Activated naive CD4-positive, alpha-beta T cell treated with anti-CD3 and anti-CD28 coated beads for 36 hours (primary cell): ENCODE measurements at regions of chr2 and their contacts with region 1.

Region 1: GRCh38 chr2:222424729-222425671 is 657 bp downstream of the SGPP2 start:
- DNase-seq: peak; percentile 67
- H3K4me3 Mint-ChIP-seq: peak overlapping the region; percentile 83
- H3K27ac Mint-ChIP-seq: peak overlapping the region; percentile 88
- H3K4me1 Mint-ChIP-seq: peaks cover 42% of the 10 kb centered on the region
- H3K27me3 Mint-ChIP-seq: peaks cover 56% of the 10 kb centered on the region

Region 2: DNA sequence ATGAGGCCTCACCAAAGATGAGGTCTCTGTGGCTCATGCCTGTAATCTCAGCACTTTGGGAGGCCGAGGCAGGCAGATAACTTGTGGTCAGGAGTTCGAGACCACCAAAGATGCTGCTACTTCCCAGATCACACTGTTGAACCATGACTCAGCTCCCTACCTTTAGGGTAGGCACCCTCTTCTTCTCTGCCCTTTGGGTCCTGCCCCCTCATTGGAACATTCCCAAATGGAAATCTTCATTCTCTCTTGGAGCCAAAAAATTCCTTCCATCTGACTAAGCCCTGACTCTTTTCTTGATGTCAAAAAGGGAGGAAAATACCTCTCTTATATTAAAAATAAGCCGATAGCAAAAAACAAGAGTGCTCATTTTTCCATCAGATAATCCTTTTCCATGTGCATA is 309.7 kb before region 1 on chr2:
- CTCF ChIA-PET with region 1: no interaction called
- intact Hi-C with region 1: no loop called
- DNase-seq: no peak
- H3K4me3 Mint-ChIP-seq: no peak overlapping the region
- H3K27ac Mint-ChIP-seq: no peak overlapping the region
- H3K4me1 Mint-ChIP-seq: no peaks in the 10 kb centered on the region
- H3K27me3 Mint-ChIP-seq: peaks cover 2% of the 10 kb centered on the region

Region 3: GRCh38 chr2:222318026-222318711 is 106.8 kb before region 1 on chr2:
- CTCF ChIA-PET with region 1: interaction called, 9 read pairs
- intact Hi-C with region 1: loop called (anchors 1 kb)
- DNase-seq: peak; percentile 58
- H3K4me3 Mint-ChIP-seq: peak overlapping the region; percentile 74
- H3K27ac Mint-ChIP-seq: no peak overlapping the region
- H3K4me1 Mint-ChIP-seq: peaks cover 6% of the 10 kb centered on the region
- H3K27me3 Mint-ChIP-seq: peaks cover 66% of the 10 kb centered on the region

Region 4: GRCh38 chr2:222399038-222399783 is 25.8 kb before region 1 on chr2:
- CTCF ChIA-PET with region 1: no interaction called
- intact Hi-C with region 1: no loop called
- DNase-seq: no peak
- H3K4me3 Mint-ChIP-seq: no peak overlapping the region
- H3K27ac Mint-ChIP-seq: no peak overlapping the region
- H3K4me1 Mint-ChIP-seq: no peaks in the 10 kb centered on the region
- H3K27me3 Mint-ChIP-seq: peaks cover 5% of the 10 kb centered on the region

Region 5: GRCh38 chr2:222483513-222484039 is 58.6 kb after region 1 on chr2:
- CTCF ChIA-PET with region 1: no interaction called
- intact Hi-C with region 1: loop called (anchors 5 kb)
- DNase-seq: peak; percentile 30
- H3K4me3 Mint-ChIP-seq: no peak overlapping the region
- H3K27ac Mint-ChIP-seq: no peak overlapping the region
- H3K4me1 Mint-ChIP-seq: peaks cover 2% of the 10 kb centered on the region
- H3K27me3 Mint-ChIP-seq: peaks cover 15% of the 10 kb centered on the region

Region 6: DNA sequence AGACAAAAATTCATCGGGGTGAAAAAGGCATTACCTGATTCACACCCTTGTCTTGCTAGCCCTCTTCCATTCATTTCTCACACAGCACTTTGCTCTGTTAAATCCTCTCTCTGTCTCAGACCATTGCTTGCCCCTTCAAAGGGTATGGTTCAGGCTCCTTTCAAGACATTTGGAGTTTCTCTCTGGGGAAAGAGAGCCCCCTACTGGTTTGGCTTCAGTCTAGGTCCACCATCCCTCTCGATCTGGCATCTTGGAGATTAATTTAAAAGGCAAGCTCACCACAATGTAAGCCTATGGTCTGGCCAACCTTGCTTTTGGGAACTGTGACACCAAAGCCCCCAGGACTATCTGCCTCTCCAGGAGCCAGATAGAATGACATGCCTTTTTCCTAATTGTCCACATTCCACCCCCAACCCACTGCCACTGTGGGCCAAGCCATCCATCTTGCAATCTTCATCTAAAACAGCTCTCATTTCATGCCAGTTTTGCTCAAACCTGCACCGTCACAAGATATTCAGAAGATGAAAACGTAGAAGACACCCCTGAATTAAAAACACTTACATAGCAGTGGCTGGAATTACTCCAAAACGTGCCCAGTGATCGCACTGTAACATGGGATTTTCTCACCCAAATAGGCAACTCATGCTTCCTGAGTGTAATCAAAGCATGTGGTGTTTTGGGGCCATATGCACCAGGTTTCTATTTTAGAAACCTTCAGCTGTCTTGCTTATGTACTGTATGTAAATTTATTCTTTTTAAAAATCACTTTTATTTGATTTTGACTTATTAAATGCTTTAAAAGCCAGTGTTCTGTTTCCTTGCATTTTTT is 137.0 kb after region 1 on chr2:
- CTCF ChIA-PET with region 1: interaction called, 7 read pairs
- intact Hi-C with region 1: loop called (anchors 5 kb)
- DNase-seq: peak; percentile 62
- H3K4me3 Mint-ChIP-seq: no peak overlapping the region
- H3K27ac Mint-ChIP-seq: no peak overlapping the region
- H3K4me1 Mint-ChIP-seq: no peaks in the 10 kb centered on the region
- H3K27me3 Mint-ChIP-seq: no peaks in the 10 kb centered on the region

Region 7: GRCh38 chr2:222592176-222592575 is 167.2 kb after region 1 on chr2:
- CTCF ChIA-PET with region 1: no interaction called
- intact Hi-C with region 1: no loop called
- DNase-seq: no peak
- H3K4me3 Mint-ChIP-seq: no peak overlapping the region
- H3K27ac Mint-ChIP-seq: no peak overlapping the region
- H3K4me1 Mint-ChIP-seq: peaks cover 2% of the 10 kb centered on the region
- H3K27me3 Mint-ChIP-seq: no peaks in the 10 kb centered on the region

Region 8: DNA sequence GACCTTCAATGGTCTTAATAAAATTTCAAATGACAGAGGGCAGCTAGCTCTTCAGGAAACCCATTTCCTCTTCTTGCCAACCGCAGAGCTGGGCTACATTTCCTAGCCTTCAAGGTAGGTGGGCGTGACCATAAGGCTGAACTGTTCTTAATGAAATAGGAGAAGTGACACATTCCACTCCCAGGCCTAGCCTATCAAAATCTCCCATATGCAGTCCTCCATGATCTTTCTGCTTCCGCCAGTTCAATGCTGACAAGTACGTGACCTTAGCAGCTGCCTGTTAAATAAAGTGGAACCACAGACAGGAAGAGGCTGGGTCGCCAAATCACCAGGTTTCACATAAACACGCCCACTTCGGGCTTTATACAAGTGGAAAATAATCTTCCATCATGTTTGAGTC is 1600.9 kb after region 1 on chr2:
- CTCF ChIA-PET with region 1: no interaction called
- intact Hi-C with region 1: loop called (anchors 10 kb)
- DNase-seq: peak; percentile 84
- H3K4me3 Mint-ChIP-seq: peak overlapping the region; percentile 64
- H3K27ac Mint-ChIP-seq: peak overlapping the region; percentile 95
- H3K4me1 Mint-ChIP-seq: peaks cover 84% of the 10 kb centered on the region
- H3K27me3 Mint-ChIP-seq: no peaks in the 10 kb centered on the region